Sigmoid colon (tissue), 7 donors: ENCODE measurements at regions of chr3 and their contacts with region 1.

Region 1: DNA sequence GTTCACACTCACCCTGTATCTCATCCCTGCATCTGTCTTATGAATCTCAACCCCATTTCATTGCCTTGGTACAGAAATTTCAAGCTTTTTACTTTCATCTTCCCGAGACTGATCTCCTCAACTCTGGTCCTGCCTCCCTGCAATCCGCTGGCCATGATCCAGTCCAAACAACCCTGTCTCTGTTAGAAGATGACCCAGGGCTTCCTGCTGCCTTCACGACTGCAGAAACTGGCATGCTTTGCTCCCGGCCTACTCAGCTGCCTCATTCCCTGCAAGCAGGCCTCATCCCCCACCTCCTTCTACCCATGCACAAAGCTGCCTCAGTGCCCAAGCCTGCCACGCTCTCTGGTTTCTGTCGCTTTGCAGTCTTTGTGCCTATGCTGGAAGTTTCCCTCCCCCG is 12.4 kb downstream of the HES1 start:
- DNase-seq: no peak
- H3K4me3 ChIP-seq: no peak overlapping the region
- H3K27ac ChIP-seq: no peak overlapping the region
- H3K4me1 ChIP-seq: peaks cover 0 to 16% (median 6%) of the 10 kb centered on the region in 4 donors
- H3K27me3 ChIP-seq: no peaks in the 10 kb centered on the region
- CTCF ChIP-seq: no peak
- EP300 ChIP-seq: no peak
- POLR2A ChIP-seq: no peak

Region 2: GRCh38 chr3:194095464-194095863 is 52.9 kb before region 1 on chr3:
- intact Hi-C with region 1: no loop called
- DNase-seq: peak; percentile 79
- H3K4me3 ChIP-seq: no peak overlapping the region
- H3K27ac ChIP-seq: no peak overlapping the region
- H3K4me1 ChIP-seq: peaks cover 0 to 10% (median 10%) of the 10 kb centered on the region in 4 donors
- H3K27me3 ChIP-seq: no peaks in the 10 kb centered on the region
- CTCF ChIP-seq: no peak
- EP300 ChIP-seq: no peak
- POLR2A ChIP-seq: no peak

Region 3: DNA sequence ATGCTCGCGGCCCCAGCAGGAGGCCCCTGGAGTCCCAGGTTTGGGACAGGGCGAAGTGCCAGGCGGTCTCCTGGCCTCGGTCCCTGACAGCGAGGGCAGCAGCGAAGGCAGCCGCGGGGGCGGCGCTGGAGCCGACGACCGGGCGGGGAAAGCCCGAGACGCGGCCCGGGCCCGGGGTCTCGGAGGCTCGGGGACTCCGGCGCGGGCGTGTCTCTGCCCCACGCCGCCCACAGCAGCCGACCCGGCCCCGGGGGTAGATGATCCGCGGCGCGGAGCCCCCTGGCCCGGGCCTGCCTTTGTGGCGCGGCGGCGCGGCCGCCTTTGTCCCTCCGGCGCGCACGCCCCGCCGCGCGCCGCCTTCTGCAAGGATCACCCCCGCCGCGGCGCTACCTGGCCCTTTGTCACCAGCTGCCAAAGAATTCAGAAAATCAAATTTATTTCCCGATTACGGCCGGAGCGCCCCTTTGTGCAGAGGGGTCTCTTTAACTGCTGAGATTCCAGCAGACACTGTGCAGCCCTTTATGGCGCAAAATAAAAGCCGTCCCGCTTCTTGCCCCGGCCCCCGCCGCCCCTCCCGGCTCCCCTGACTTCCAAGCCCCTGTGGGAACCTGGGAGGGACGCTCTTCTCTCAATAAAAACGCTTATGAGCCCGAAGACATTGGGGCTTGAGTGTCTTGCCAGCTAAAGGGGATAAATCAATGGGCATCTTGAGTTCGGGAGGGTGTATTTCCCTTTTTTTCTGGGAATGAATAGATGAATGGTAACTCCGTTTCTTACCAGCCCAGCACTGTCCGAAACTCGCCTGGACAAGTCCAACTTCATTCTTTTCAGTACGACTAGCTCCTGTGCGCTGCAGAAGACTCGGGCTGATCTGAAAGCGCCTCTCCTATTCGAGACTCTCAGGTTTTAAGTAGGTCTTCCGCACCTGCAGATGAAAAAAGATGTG is 55.9 kb after region 1 on chr3:
- intact Hi-C with region 1: loop called (anchors 5 kb)
- DNase-seq: peak; percentile 44
- H3K4me3 ChIP-seq: peak overlapping the region in 3 of 4 donors; percentile 29 to 43 (median 41)
- H3K27ac ChIP-seq: no peak overlapping the region
- H3K4me1 ChIP-seq: peaks cover 0 to 26% (median 21%) of the 10 kb centered on the region in 4 donors
- H3K27me3 ChIP-seq: peaks cover 7 to 25% (median 13%) of the 10 kb centered on the region in 3 donors
- CTCF ChIP-seq: no peak
- EP300 ChIP-seq: no peak
- POLR2A ChIP-seq: no peak